Activated CD4-positive, alpha-beta T cell treated with anti-CD3 and anti-CD28 coated beads, Interleukin-2, amount 10 ng/mL, durations not matched to agents 24 days and 14 days (primary cell): ENCODE measurements at regions of chr11 and their contacts with region 1.

Region 1: GRCh38 chr11:107493117-107493516 is 35.5 kb upstream of the CWF19L2 start:
- DNase-seq: no peak
- H3K4me3 Mint-ChIP-seq: no peak overlapping the region
- H3K27ac Mint-ChIP-seq: no peak overlapping the region
- H3K4me1 Mint-ChIP-seq: no peaks in the 10 kb centered on the region
- H3K27me3 Mint-ChIP-seq: peaks cover 9% of the 10 kb centered on the region

Region 2: GRCh38 chr11:106271686-106272085 is 1221.4 kb before region 1 on chr11:
- intact Hi-C with region 1: no loop called
- DNase-seq: no peak
- H3K4me3 Mint-ChIP-seq: no peak overlapping the region
- H3K27ac Mint-ChIP-seq: no peak overlapping the region
- H3K4me1 Mint-ChIP-seq: no peaks in the 10 kb centered on the region
- H3K27me3 Mint-ChIP-seq: no peaks in the 10 kb centered on the region

Region 3: DNA sequence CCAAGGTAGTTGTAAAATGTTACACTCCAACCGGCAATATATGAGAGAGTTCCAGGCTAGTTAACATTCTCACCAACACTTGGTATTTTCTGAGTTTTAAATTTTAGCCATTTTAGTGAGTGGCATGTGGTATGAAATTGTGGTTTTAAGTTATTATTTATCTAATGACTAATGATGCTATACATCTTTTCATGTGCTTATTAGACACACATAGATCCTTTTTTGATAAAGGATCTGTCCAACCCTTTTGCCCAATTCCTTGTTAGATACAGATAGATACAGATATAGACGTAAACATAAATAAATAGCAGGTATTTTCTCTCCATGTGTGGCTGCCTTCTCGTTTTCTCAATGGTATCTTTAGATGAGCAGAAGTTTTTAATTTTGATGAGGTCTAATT is 33.1 kb after region 1 on chr11:
- intact Hi-C with region 1: loop called (anchors 1 kb)
- DNase-seq: no peak
- H3K4me3 Mint-ChIP-seq: no peak overlapping the region
- H3K27ac Mint-ChIP-seq: no peak overlapping the region
- H3K4me1 Mint-ChIP-seq: no peaks in the 10 kb centered on the region
- H3K27me3 Mint-ChIP-seq: no peaks in the 10 kb centered on the region

Region 4: GRCh38 chr11:107969219-107969618 is 476.1 kb after region 1 on chr11:
- intact Hi-C with region 1: no loop called
- DNase-seq: no peak
- H3K4me3 Mint-ChIP-seq: no peak overlapping the region
- H3K27ac Mint-ChIP-seq: no peak overlapping the region
- H3K4me1 Mint-ChIP-seq: no peaks in the 10 kb centered on the region
- H3K27me3 Mint-ChIP-seq: peaks cover 4% of the 10 kb centered on the region